ENCODE measurements at regions of chr16 and their contacts with region 1.

Region 1: DNA sequence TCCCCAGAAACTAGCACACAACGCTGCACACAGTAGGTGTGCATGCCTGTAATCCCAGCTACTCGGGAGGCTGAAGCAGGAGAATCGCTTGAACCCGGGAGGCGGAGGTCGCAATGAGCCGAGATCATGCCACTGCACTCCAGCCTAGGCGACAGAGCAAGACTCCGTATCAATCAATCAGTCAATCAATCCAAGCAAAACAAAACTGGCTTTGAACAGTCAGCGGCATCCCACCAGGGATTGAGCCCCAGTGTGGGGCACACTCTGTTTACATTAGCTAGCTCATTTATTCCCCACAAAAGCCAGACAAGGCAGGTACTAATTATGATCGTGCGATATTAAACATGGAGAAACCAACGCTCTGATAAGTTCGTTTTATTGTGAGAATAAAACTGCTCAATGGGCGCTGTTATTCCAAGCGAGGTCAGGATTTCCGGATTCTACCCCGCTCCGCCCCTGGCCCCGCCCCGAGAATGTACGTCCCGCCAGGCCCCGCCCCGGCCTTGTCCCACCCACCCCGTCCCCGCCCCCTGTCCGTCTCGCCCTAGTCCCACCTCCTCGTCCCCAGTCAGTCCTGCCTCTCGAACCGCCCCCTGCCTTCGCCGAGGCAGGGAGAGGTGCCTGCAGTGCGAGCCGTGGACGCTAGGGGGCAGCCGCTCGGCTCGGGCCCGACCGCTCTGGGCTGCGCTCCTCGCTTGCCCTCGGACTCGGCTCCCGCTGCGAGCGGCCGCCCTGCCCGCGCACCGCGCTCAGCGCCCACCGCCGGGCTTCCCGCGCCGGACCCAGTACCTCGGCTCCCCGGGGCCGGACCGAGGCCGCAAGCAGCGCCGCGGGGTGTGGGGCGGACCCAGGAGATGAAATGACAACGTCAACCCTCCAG is at the start of gene VPS4A:
- DNase-seq: peak; percentile 95 to 99 (median 97)
- ATAC-seq: peak; percentile 99
- H3K4me3 ChIP-seq: peak within 1 kb of the TSS; percentile 74
- H3K4me3 Mint-ChIP-seq: peak within 1 kb of the TSS; percentile 90 to 100 (median 99)
- H3K27ac ChIP-seq: peak within 1 kb of the TSS; percentile 94
- H3K27ac Mint-ChIP-seq: peak within 1 kb of the TSS; percentile 92 to 99 (median 95)
- H3K4me1 ChIP-seq: peaks cover 8 to 10% of the 10 kb centered on the region in 2 donors
- H3K4me1 Mint-ChIP-seq: peaks cover 17 to 36% (median 29%) of the 10 kb centered on the region in 7 donors
- H3K27me3 ChIP-seq: no peaks in the 10 kb centered on the region
- H3K27me3 Mint-ChIP-seq: no peaks in the 10 kb centered on the region
- total RNA-seq, gene VPS4A: 36.7 to 53.7 (median 46.9) TPM

Region 2: DNA sequence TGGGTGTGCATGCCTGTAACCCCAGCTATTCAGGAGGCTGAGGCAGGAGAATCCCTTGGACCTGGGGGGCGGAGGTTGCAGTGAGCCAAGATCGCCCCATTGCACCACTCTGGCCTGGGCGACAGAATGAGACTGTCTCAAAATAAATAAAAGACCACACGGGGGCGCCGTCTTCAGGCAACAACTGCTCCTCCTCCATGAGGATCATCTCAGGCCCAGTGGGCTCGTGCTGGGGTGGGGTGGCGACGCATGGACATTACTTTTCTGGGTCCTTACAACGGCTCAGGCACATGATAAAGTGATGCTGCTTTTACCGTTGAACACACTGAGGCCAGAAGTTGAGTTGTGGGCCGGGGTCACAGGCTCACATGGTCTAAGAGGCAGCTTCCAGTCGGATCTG is 943.9 kb before region 1 on chr16:
- CTCF ChIA-PET with region 1: no interaction called
- POLR2A ChIA-PET with region 1: no interaction called
- intact Hi-C with region 1: no loop called
- DNase-seq: peak in 5 of 9 donors; percentile 31 to 50 (median 38)
- ATAC-seq: no peak
- H3K4me3 ChIP-seq: no peak overlapping the region
- H3K4me3 Mint-ChIP-seq: peak overlapping the region in 2 of 10 donors; percentile 51 to 58
- H3K27ac ChIP-seq: no peak overlapping the region
- H3K27ac Mint-ChIP-seq: peak overlapping the region in 2 of 9 donors; percentile 3 to 70
- H3K4me1 ChIP-seq: peaks cover 23 to 51% of the 10 kb centered on the region in 2 donors
- H3K4me1 Mint-ChIP-seq: peaks cover 39 to 58% (median 48%) of the 10 kb centered on the region in 7 donors
- H3K27me3 ChIP-seq: no peaks in the 10 kb centered on the region
- H3K27me3 Mint-ChIP-seq: peaks cover 0 to 34% (median 0%) of the 10 kb centered on the region in 5 donors

Region 3: GRCh38 chr16:69132424-69133252 is 178.3 kb before region 1 on chr16 and contains the starts of genes CHTF8 and UTP4:
- CTCF ChIA-PET with region 1: no interaction called
- POLR2A ChIA-PET with region 1: interaction called, 4 read pairs
- intact Hi-C with region 1: loop called (anchors 1 kb)
- DNase-seq: peak; percentile 81 to 91 (median 87)
- ATAC-seq: peak; percentile 95
- H3K4me3 ChIP-seq: peak within 1 kb of the TSS; percentile 80
- H3K4me3 Mint-ChIP-seq: peak within 1 kb of the TSS; percentile 91 to 97 (median 94)
- H3K27ac ChIP-seq: peak within 1 kb of the TSS; percentile 88
- H3K27ac Mint-ChIP-seq: peak within 1 kb of the TSS; percentile 85 to 97 (median 95)
- H3K4me1 ChIP-seq: peaks cover 12 to 23% of the 10 kb centered on the region in 2 donors
- H3K4me1 Mint-ChIP-seq: peaks cover 16 to 71% (median 61%) of the 10 kb centered on the region in 7 donors
- H3K27me3 ChIP-seq: no peaks in the 10 kb centered on the region
- H3K27me3 Mint-ChIP-seq: no peaks in the 10 kb centered on the region
- total RNA-seq, gene CHTF8: 53.3 to 142 (median 133) TPM
- total RNA-seq, gene UTP4: 31.9 to 56.5 (median 35.1) TPM

Region 4: GRCh38 chr16:69323420-69323819 is 12.5 kb after region 1 on chr16:
- CTCF ChIA-PET with region 1: interaction called, 4 read pairs
- POLR2A ChIA-PET with region 1: interaction called, 42 read pairs
- intact Hi-C with region 1: loop called in 1 of 2 experiments (anchors 1 kb)
- DNase-seq: no peak
- ATAC-seq: no peak
- H3K4me3 ChIP-seq: no peak overlapping the region
- H3K4me3 Mint-ChIP-seq: no peak overlapping the region
- H3K27ac ChIP-seq: no peak overlapping the region
- H3K27ac Mint-ChIP-seq: no peak overlapping the region
- H3K4me1 ChIP-seq: peaks cover 2 to 16% of the 10 kb centered on the region in 2 donors
- H3K4me1 Mint-ChIP-seq: peaks cover 20 to 45% (median 37%) of the 10 kb centered on the region in 7 donors
- H3K27me3 ChIP-seq: no peaks in the 10 kb centered on the region
- H3K27me3 Mint-ChIP-seq: no peaks in the 10 kb centered on the region

Region 5: DNA sequence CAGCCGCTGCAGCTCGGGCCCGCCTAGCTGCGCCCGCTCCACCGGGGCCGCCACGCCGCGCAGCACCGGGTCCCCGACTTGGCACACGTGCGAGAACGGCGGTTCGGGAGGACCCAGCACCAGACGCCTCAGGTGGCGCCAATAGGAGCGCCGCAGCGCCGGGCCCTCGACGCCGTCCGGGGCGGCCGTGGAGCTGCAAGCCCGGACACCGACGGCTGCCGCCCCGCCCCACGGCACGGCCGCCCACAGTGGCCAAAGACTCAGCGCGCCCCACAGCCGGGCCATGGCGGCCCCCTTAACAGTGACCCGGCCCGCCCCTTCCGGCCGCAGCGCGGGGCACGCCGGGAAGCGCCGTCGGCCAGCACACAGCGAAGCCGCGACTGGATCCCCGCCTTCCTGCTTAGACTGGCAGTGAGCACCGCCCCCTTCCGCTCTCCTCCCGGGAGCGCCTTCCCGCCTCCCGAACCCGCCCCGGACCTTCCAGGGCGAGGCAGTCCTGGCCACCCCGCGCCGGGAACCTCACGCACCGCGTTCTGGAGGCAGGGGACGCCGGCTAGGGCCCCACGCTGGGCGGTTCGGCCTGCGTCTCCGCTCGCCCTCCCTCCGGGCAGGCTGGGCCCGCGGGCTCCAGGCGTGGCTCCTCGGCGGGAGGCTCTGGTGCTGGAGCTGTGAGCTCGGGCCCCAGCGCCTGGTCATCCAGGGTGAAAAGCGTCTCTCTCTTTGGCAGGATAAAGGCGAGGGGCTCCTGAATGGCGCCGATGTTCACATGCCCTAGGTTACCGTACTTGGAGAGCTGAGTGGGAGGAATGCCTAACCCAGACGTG is 19.6 kb after region 1 on chr16 and contains the start of gene PDF:
- CTCF ChIA-PET with region 1: interaction called, 4 read pairs
- POLR2A ChIA-PET with region 1: interaction called, 42 read pairs
- intact Hi-C with region 1: loop called (anchors 1 kb)
- DNase-seq: peak; percentile 61 to 91 (median 72)
- ATAC-seq: peak; percentile 97
- H3K4me3 ChIP-seq: peak within 1 kb of the TSS; percentile 64
- H3K4me3 Mint-ChIP-seq: peak within 1 kb of the TSS; percentile 69 to 87 (median 76)
- H3K27ac ChIP-seq: peak within 1 kb of the TSS; percentile 90
- H3K27ac Mint-ChIP-seq: peak within 1 kb of the TSS; percentile 36 to 80 (median 62)
- H3K4me1 ChIP-seq: peaks cover 13 to 37% of the 10 kb centered on the region in 2 donors
- H3K4me1 Mint-ChIP-seq: peaks cover 16 to 72% (median 54%) of the 10 kb centered on the region in 7 donors
- H3K27me3 ChIP-seq: no peaks in the 10 kb centered on the region
- H3K27me3 Mint-ChIP-seq: no peaks in the 10 kb centered on the region
- total RNA-seq, gene PDF: 4.6 to 11.8 (median 9.5) TPM

Region 6: DNA sequence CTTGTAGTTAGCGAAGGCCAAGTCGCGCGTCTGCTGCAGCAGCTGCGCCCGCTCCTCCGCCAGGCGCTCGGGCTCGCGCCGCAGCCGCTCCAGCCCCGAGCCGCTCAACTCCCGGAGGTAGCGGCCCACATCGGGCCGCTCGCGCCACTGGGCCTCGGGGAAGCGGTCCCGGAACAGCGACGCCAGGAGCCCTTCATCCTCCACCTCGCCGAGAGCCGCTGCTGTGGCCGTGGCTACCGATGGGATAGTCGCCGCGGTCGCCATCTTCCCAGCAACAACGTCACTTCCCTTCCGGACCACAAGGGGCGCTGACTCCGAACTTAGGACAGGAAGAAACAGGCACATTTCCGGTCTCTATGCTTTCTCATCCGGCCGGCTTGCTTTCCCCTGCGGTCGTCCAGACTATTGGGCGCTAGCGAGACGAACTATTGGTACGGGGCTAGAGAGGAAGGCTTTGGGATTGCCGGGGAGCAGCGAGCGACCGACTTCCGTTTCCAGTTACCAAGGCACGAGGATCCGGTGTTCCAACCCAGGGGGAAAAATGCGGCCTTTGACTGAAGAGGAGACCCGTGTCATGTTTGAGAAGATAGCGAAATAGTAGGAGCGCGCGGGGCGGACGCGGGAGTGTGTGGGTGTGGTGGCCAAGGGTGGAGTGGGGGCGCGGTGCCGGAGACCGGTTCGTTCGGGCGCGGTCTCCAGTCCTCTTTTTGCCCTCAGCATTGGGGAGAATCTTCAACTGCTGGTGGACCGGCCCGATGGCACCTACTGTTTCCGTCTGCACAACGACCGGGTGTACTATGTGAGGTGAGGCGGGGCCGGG is 28.6 kb after region 1 on chr16 and contains the starts of genes COG8 and NIP7:
- CTCF ChIA-PET with region 1: interaction called, 3 read pairs
- POLR2A ChIA-PET with region 1: interaction called, 5 read pairs
- intact Hi-C with region 1: loop called (anchors 1 kb)
- DNase-seq: peak; percentile 78 to 91 (median 90)
- ATAC-seq: peak; percentile 95
- H3K4me3 ChIP-seq: peak within 1 kb of the TSS; percentile 80
- H3K4me3 Mint-ChIP-seq: peak within 1 kb of the TSS; percentile 97 to 100 (median 99)
- H3K27ac ChIP-seq: peak within 1 kb of the TSS; percentile 86
- H3K27ac Mint-ChIP-seq: peak within 1 kb of the TSS; percentile 95 to 99 (median 98)
- H3K4me1 ChIP-seq: peaks cover 20 to 25% of the 10 kb centered on the region in 2 donors
- H3K4me1 Mint-ChIP-seq: peaks cover 31 to 70% (median 49%) of the 10 kb centered on the region in 7 donors
- H3K27me3 ChIP-seq: no peaks in the 10 kb centered on the region
- H3K27me3 Mint-ChIP-seq: no peaks in the 10 kb centered on the region
- total RNA-seq, gene COG8: 29.5 to 73.7 (median 37.4) TPM
- total RNA-seq, gene NIP7: 22.1 to 40.9 (median 30.3) TPM

Measured in naive thymus-derived CD4-positive, alpha-beta T cell (primary cell).